ENCODE measurements at regions of chrX and their contacts with region 1.

Region 1: GRCh38 chrX:68807818-68808217 is 21.0 kb upstream of the EFNB1 start:
- DNase-seq: no peak
- ATAC-seq: no peak

Region 2: GRCh38 chrX:68511255-68511654 is 296.6 kb before region 1 on chrX:
- intact Hi-C with region 1: loop called (anchors 5 kb)
- DNase-seq: no peak
- ATAC-seq: no peak

Region 3: GRCh38 chrX:68732906-68733493 is 74.8 kb before region 1 on chrX:
- intact Hi-C with region 1: loop called (anchors 1 kb)
- DNase-seq: peak; percentile 83
- ATAC-seq: peak; percentile 80